Cardiac septum (tissue), 1 donor: ENCODE measurements at regions of chr4 and their contacts with region 1.

Region 1: GRCh38 chr4:113899271-113900070 is 80.0 kb downstream of the ARSJ start:
- DNase-seq: no peak

Region 2: DNA sequence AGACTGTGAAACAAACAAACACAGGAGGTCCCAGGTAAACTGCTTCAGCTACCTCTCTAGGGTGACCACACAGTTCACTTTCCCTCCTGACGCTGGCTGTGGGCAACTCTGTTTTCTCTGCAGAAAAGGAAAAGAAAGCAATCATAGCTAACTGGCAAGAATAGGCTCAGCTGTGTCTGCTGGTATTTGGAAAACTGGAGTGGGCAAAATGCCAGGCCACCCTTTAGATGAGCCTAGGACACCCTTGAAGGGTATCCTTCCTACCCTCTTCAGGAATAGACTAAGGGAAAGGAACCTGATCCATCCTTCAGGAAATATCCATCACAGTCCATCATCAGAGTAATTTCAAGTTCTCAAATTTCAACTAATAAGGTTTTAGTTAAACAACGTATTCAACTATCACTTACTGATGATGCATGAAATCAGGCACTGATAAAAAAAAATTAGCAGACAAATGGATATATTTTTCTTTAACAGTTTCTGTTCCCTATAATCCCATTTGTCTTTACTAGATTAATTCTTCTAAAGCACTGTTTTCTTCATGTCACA is 198.8 kb before region 1 on chr4:
- intact Hi-C with region 1: no loop called
- DNase-seq: no peak

Region 3: DNA sequence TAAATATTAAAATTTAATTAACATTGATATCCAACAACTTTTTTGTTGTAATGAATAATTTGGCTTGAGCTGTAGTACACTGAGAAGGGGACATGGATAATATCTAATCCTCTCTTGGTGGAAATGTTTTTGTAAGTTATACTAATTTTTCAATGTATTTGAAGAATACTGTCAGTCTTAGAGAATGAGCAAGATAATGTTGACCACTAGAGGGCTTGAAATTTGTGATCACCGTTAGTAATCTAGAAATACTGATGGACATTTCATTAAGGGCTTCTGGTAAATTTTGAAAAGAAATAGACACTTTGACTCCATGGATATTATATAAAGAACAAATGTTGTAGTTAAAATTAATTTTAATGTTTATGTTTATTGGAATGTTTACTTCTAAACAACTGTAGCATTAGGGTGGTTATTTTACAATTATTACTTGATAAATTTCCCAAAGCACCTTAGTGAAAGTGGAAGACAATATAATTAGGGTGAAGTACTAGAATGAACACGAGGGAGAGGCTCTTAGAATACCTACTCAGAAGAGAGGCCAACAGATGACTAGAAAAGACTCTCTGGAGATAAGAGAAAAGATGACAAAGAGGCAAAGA is 117.9 kb before region 1 on chr4:
- intact Hi-C with region 1: loop called (anchors 10 kb)
- DNase-seq: no peak